K562 (cell line): ENCODE measurements at regions of chr17 and their contacts with region 1.

Region 1: GRCh38 chr17:28849281-28849680 is 5.5 kb upstream of the ERAL1 start:
- DNase-seq: peak in 3 of 4 experiments; percentile 52 to 58 (median 55)
- ATAC-seq: peak; percentile 87
- H3K4me3 ChIP-seq: no peak overlapping the region
- H3K27ac ChIP-seq: no peak overlapping the region
- H3K4me1 ChIP-seq: peaks cover 3 to 14% of the 10 kb centered on the region in 2 experiments; a peak in 2 of 5 replicates
- H3K27me3 ChIP-seq: no peaks in the 10 kb centered on the region
- CTCF ChIP-seq: peak; percentile 50 to 81 (median 59)
- EP300 ChIP-seq: no peak
- POLR2A ChIP-seq: no peak
- RAD21 ChIP-seq: peak; percentile 40 to 77; a peak in 3 of 4 replicates

Region 2: DNA sequence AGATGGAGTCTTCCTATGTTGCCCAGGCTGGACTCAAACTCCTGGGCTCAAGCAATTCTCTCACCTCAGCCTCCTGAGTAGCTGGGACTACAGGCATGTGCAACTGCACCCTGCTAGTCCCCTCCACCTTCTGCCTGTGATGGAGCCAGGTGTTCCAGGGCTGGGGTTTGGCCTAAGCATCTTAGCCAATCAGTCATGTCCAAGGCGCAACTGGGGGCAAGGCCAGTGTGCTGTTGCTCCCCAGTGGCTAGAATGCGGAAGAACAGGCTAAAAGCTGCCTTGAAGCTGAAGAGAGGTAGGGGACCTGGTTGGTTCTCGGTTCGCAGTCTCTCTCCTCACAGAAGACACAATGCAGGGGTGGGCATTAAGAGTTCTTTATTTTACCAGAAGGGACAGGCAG is 29.7 kb after region 1 on chr17:
- CTCF ChIA-PET with region 1: no interaction called
- POLR2A ChIA-PET with region 1: interaction called, 3 read pairs
- in situ Hi-C with region 1: no loop called
- intact Hi-C with region 1: loop called (anchors 1 kb)
- DNase-seq: peak; percentile 79 to 87 (median 84)
- ATAC-seq: peak; percentile 92
- H3K4me3 ChIP-seq: no peak overlapping the region
- H3K27ac ChIP-seq: no peak overlapping the region
- H3K4me1 ChIP-seq: peaks cover 31 to 42% of the 10 kb centered on the region in 2 experiments
- H3K27me3 ChIP-seq: no peaks in the 10 kb centered on the region
- CTCF ChIP-seq: peak; percentile 77 to 91 (median 88)
- EP300 ChIP-seq: no peak
- POLR2A ChIP-seq: no peak
- RAD21 ChIP-seq: peak; percentile 58 to 91

Region 3: DNA sequence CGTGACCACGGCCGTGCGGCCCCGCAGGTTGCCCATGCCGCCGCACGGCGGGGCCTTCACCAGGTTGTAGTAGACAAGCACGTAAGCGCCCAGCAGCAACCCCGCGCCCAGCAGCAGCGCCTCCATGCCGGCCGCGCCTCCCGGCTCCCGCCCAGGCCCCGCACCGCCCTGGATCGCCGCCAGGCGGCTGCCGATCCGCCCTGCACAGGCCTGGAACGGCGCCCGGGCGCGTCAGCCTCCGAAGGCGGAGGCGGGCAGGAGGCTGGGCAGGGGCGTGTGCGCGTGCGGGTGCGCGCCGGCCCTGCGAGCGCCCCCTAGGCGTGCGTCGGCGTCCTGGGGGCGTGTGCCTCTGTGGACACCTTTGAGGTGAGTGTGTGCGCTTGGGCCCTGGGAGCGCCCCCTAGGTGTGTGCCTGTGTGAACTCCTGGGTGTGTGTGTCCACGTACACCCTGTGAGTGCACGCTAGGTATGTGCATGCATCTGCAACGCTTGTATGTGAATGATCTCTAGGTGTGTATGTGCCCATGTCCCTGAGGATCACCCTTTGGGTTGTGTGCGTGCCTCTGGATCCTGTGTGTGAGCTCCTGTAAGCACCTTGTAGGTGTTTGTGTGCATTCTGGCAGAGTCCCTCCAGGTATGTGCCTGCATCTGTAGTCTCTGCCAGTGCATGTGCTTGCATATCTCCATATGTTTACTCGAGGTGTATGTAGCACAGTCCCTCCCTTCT is 53.7 kb after region 1 on chr17 and contains the start of gene DHRS13:
- CTCF ChIA-PET with region 1: interaction called, 6 read pairs
- POLR2A ChIA-PET with region 1: interaction called, 3 read pairs
- in situ Hi-C with region 1: no loop called
- intact Hi-C with region 1: loop called (anchors 2 kb)
- DNase-seq: peak; percentile 95 to 98 (median 96)
- ATAC-seq: peak; percentile 88
- H3K4me3 ChIP-seq: peak within 1 kb of the TSS; percentile 81
- H3K27ac ChIP-seq: peak within 1 kb of the TSS; percentile 85
- H3K4me1 ChIP-seq: peaks cover 69 to 72% of the 10 kb centered on the region in 2 experiments; a peak in 4 of 5 replicates
- H3K27me3 ChIP-seq: no peaks in the 10 kb centered on the region
- CTCF ChIP-seq: peak; percentile 99
- EP300 ChIP-seq: peak; percentile 72
- POLR2A ChIP-seq: peak; percentile 20; the same call in 1 of the 2 replicates
- RAD21 ChIP-seq: peak; percentile 80 to 87
- polyA plus RNA-seq, gene DHRS13: 0.32 TPM in 1 of 2 experiments, not detected in the other

Region 4: GRCh38 chr17:28916302-28916934 is 67.1 kb after region 1 on chr17:
- CTCF ChIA-PET with region 1: interaction called, 3 read pairs
- POLR2A ChIA-PET with region 1: no interaction called
- in situ Hi-C with region 1: no loop called
- intact Hi-C with region 1: loop called (anchors 2 kb)
- DNase-seq: peak in 2 of 4 experiments; percentile 44 to 73
- ATAC-seq: peak; percentile 82
- H3K4me3 ChIP-seq: no peak overlapping the region
- H3K27ac ChIP-seq: no peak overlapping the region; the same call in 2 of the 3 replicates
- H3K4me1 ChIP-seq: peaks cover 17 to 18% of the 10 kb centered on the region in 2 experiments
- H3K27me3 ChIP-seq: no peaks in the 10 kb centered on the region
- CTCF ChIP-seq: peak; percentile 73 to 82 (median 76)
- EP300 ChIP-seq: no peak
- POLR2A ChIP-seq: no peak
- RAD21 ChIP-seq: peak; percentile 76 to 84

Region 5: GRCh38 chr17:28951991-28952975 is 103.0 kb after region 1 on chr17:
- CTCF ChIA-PET with region 1: no interaction called
- POLR2A ChIA-PET with region 1: interaction called, 4 read pairs
- in situ Hi-C with region 1: no loop called
- intact Hi-C with region 1: loop called (anchors 5 kb)
- DNase-seq: peak; percentile 89 to 99 (median 92)
- ATAC-seq: peak; percentile 83
- H3K4me3 ChIP-seq: peak overlapping the region; percentile 59
- H3K27ac ChIP-seq: peak overlapping the region; percentile 100
- H3K4me1 ChIP-seq: peaks cover 15 to 18% of the 10 kb centered on the region in 2 experiments
- H3K27me3 ChIP-seq: peaks cover 0 to 7% of the 10 kb centered on the region in 2 experiments; a peak in 2 of 5 replicates
- CTCF ChIP-seq: peak in 1 of 3 experiments; percentile 20; a peak in 1 of 6 replicates
- EP300 ChIP-seq: no peak; the same call in 1 of the 2 replicates
- POLR2A ChIP-seq: peak; percentile 86
- RAD21 ChIP-seq: no peak